ENCODE measurements at regions of chr12 and their contacts with region 1.

Region 1: DNA sequence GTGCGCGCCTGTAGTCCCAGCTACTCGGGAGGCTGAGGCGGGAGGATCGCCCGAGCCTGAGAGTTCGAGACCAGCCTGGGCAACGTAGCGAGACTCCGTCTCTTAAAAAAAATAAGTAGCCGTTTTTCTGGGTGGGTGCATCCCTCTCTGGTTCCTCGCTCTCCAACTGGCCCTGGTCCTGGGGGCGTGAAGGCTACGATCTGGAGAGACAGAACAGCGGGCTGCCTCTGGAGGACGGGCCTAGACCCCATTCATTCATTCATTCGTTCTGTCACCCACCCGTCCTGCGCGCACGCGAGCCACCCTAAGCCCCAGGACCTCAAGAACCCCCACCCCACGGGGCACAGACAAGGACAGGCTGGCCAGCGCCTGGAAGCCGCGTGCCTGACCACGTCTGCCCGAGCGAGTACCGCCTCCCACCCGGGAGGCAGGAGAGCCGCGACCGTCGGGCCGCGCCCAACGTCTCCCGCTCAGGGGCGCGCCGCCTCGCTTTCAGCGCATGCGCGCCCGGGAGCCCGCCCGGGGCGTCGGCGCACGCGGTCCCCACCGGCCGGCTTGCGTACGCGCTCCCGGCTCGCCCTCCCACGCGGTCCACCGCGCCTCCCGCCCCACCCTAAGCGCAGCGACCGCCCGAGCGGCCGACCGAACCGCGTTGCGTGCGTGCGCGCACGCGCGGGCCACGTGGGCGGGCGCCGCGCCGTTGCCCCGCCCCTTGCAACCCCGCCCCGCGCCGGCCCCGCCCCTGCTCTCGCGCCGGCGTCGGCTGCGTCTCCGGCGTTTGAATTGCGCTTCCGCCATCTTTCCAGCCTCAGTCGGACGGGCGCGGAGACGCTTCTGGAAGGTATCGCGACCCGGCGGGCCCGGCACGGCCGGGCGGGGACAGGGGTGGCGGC is at the start of gene RAN:
- DNase-seq: peak; percentile 92
- ATAC-seq: peak; percentile 72
- H3K4me3 Mint-ChIP-seq: peak within 1 kb of the TSS; percentile 98
- H3K27ac Mint-ChIP-seq: peak within 1 kb of the TSS; percentile 100
- H3K4me1 Mint-ChIP-seq: peaks cover 47% of the 10 kb centered on the region
- H3K27me3 Mint-ChIP-seq: no peaks in the 10 kb centered on the region
- CTCF ChIP-seq: no peak
- total RNA-seq, gene RAN: 2,177 to 2,247 TPM

Region 2: GRCh38 chr12:130739571-130739970 is 132.0 kb before region 1 on chr12:
- CTCF ChIA-PET with region 1: no interaction called
- POLR2A ChIA-PET with region 1: no interaction called
- intact Hi-C with region 1: no loop called
- DNase-seq: no peak
- ATAC-seq: no peak
- H3K4me3 Mint-ChIP-seq: no peak overlapping the region
- H3K27ac Mint-ChIP-seq: no peak overlapping the region
- H3K4me1 Mint-ChIP-seq: no peaks in the 10 kb centered on the region
- H3K27me3 Mint-ChIP-seq: peaks cover 17% of the 10 kb centered on the region
- CTCF ChIP-seq: no peak

Region 3: DNA sequence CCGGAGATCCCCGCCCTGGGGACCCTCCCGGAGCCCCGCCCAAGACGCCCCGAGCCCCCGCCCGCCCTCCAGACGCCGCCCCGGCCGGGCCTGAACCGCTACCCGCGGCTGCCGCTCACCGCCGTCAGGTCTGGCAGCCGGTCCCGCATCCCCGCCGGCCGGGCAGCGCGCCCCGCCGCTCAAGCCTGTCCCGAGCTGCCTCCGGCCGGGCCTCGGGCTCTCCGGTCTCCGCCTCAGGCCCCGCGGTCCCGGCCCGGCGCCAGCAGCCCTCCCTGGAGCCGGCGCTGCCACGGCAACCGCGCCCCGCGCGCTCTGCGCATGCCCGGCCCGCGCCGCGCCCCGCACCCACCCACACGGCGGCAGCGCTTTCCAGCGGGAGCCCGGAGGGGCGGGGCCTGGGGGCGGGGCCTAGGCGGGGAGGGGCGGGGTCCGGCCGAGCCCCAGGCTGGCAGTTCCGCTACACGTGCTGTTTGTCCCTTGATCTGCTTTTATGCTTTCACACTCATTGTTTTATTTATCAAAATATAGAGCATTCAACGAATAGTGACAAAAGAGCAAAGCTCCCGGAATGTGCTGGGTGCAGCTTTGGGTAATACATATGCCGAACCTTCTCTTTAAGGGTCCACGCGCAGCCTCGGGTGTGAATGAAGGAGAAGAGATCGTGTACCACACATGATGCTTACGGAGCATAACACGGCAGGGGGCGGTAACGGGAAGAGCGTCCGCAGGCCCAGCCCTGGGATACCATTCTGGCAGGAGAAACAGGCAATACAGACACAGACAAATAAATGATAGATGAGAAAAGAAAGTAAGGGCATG is 32.4 kb before region 1 on chr12 and contains the start of gene STX2:
- CTCF ChIA-PET with region 1: interaction called, 13 read pairs
- POLR2A ChIA-PET with region 1: interaction called, 15 read pairs
- intact Hi-C with region 1: loop called (anchors 5 kb)
- DNase-seq: peak; percentile 83
- ATAC-seq: peak; percentile 94
- H3K4me3 Mint-ChIP-seq: peak within 1 kb of the TSS; percentile 80
- H3K27ac Mint-ChIP-seq: peak within 1 kb of the TSS; percentile 65
- H3K4me1 Mint-ChIP-seq: peaks cover 30% of the 10 kb centered on the region
- H3K27me3 Mint-ChIP-seq: no peaks in the 10 kb centered on the region
- CTCF ChIP-seq: no peak
- total RNA-seq, gene STX2: 11.8 to 12.4 TPM

Region 4: GRCh38 chr12:130904064-130904463 is 32.5 kb after region 1 on chr12:
- CTCF ChIA-PET with region 1: no interaction called
- POLR2A ChIA-PET with region 1: no interaction called
- intact Hi-C with region 1: no loop called
- DNase-seq: no peak
- ATAC-seq: no peak
- H3K4me3 Mint-ChIP-seq: no peak overlapping the region
- H3K27ac Mint-ChIP-seq: no peak overlapping the region
- H3K4me1 Mint-ChIP-seq: no peaks in the 10 kb centered on the region
- H3K27me3 Mint-ChIP-seq: peaks cover 5% of the 10 kb centered on the region
- CTCF ChIP-seq: no peak

Region 5: GRCh38 chr12:131035268-131035681 is 163.7 kb after region 1 on chr12:
- CTCF ChIA-PET with region 1: no interaction called
- POLR2A ChIA-PET with region 1: no interaction called
- intact Hi-C with region 1: no loop called
- DNase-seq: peak; percentile 30
- ATAC-seq: peak; percentile 67
- H3K4me3 Mint-ChIP-seq: no peak overlapping the region
- H3K27ac Mint-ChIP-seq: no peak overlapping the region
- H3K4me1 Mint-ChIP-seq: peaks cover 6% of the 10 kb centered on the region
- H3K27me3 Mint-ChIP-seq: no peaks in the 10 kb centered on the region
- CTCF ChIP-seq: no peak